Panc1 (cell line): ENCODE measurements at regions of chr9 and their contacts with region 1.

Region 1: GRCh38 chr9:130039528-130040147 is 3.4 kb downstream of the FNBP1 start:
- DNase-seq: no peak
- ATAC-seq: no peak
- H3K4me3 ChIP-seq: no peak overlapping the region
- H3K27ac ChIP-seq: no peak overlapping the region
- H3K4me1 ChIP-seq: peaks cover 21% of the 10 kb centered on the region
- H3K27me3 ChIP-seq: no peaks in the 10 kb centered on the region
- CTCF ChIP-seq: peak; percentile 51

Region 2: DNA sequence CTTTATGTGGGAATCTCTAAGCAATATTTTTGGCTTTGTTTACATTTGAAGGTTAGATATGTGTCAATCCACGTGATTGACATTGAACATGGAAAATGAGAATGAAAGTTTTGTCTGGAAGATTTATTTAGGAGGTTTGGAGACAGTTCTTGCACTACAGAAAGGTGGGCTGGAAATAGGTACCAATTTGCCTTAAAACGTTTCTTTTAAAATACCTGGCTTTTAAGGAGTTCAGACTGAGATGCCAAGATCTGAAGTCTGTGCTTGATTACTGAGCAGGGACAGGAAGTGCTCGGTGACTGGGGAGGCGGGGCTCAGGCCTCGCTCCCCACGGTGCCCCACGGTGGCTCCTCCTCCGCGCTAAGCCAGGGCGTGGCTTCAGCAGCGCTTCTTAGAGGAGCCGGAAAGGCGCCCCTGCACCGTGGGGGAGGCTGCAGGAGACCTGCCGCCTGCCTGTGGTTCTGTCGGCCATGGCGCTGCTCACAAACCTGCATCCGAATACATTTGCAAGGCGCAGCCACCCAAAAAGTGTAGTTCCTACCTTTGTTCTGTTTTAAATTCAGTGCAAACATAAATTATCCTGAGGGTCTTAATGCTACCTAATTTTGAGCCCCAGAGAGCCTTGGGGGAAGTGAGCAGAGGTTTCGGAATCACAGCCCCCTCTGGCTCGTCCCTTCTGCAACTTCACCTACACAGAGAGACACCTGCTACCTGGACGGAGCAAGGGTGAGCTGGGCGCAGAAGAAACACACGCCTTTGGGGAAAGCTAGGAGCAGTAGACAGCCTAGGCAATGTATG is 155.2 kb before region 1 on chr9:
- CTCF ChIA-PET with region 1: no interaction called
- POLR2A ChIA-PET with region 1: no interaction called
- in situ Hi-C with region 1: no loop called
- intact Hi-C with region 1: loop called (anchors 10 kb)
- DNase-seq: no peak
- ATAC-seq: peak; percentile 50; the same call in 1 of the 2 replicates
- H3K4me3 ChIP-seq: no peak overlapping the region
- H3K27ac ChIP-seq: no peak overlapping the region
- H3K4me1 ChIP-seq: no peaks in the 10 kb centered on the region
- H3K27me3 ChIP-seq: no peaks in the 10 kb centered on the region
- CTCF ChIP-seq: no peak

Region 3: DNA sequence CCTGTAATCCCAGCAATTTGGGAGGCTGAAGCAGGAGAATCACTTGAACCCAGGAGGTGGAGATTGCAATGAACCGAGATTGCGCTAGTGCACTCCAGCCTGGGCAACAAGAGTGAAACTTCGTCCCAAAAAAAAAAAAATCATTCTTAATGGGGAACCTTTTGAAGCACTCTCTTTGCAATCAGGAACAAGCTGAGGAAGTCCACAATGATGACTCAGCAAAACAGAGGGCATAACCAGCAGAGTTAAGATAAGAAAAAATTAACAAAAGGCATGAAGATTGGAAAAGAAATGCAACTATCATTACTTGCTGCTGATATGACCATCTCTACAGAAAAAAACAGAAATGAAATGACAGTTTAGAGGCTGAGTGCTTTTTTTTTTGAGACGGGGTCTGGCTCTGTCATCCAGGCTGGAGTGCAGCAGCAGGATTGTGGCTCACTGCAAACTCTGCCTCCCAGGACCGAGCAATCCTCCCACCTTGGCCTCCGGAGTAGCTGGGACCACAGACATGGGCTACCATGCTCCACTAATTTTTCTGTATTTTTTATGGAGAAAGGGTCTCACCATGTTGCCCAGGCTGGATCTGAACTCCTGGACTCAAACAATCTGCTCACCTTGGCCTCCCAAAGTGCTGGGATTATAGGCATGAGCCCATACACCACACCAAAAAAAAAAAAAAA is 84.6 kb before region 1 on chr9:
- CTCF ChIA-PET with region 1: no interaction called
- POLR2A ChIA-PET with region 1: no interaction called
- in situ Hi-C with region 1: no loop called
- intact Hi-C with region 1: no loop called
- DNase-seq: no peak
- ATAC-seq: no peak
- H3K4me3 ChIP-seq: no peak overlapping the region
- H3K27ac ChIP-seq: no peak overlapping the region
- H3K4me1 ChIP-seq: no peaks in the 10 kb centered on the region; the same call in 1 of the 2 replicates
- H3K27me3 ChIP-seq: no peaks in the 10 kb centered on the region
- CTCF ChIP-seq: no peak

Region 4: GRCh38 chr9:130017076-130017475 is 22.6 kb before region 1 on chr9:
- CTCF ChIA-PET with region 1: interaction called, 14 read pairs
- POLR2A ChIA-PET with region 1: no interaction called
- in situ Hi-C with region 1: no loop called
- intact Hi-C with region 1: no loop called
- DNase-seq: no peak
- ATAC-seq: peak; percentile 44; the same call in 1 of the 2 replicates
- H3K4me3 ChIP-seq: no peak overlapping the region
- H3K27ac ChIP-seq: no peak overlapping the region
- H3K4me1 ChIP-seq: peaks cover 20% of the 10 kb centered on the region
- H3K27me3 ChIP-seq: no peaks in the 10 kb centered on the region
- CTCF ChIP-seq: no peak

Region 5: GRCh38 chr9:130275771-130276520 is 236.3 kb after region 1 on chr9:
- CTCF ChIA-PET with region 1: no interaction called
- POLR2A ChIA-PET with region 1: no interaction called
- in situ Hi-C with region 1: no loop called
- intact Hi-C with region 1: no loop called
- DNase-seq: no peak
- ATAC-seq: no peak
- H3K4me3 ChIP-seq: no peak overlapping the region
- H3K27ac ChIP-seq: no peak overlapping the region
- H3K4me1 ChIP-seq: no peaks in the 10 kb centered on the region
- H3K27me3 ChIP-seq: no peaks in the 10 kb centered on the region
- CTCF ChIP-seq: no peak